HCT116 (cell line): ENCODE measurements at regions of chr5 and their contacts with region 1.

Region 1: GRCh38 chr5:73902327-73903051 is 276.5 kb downstream of the ARHGEF28 start:
- DNase-seq: peak; percentile 63
- ATAC-seq: peak; percentile 36; the same call in 1 of the 2 replicates
- H3K4me3 ChIP-seq: no peak overlapping the region
- H3K27ac ChIP-seq: no peak overlapping the region
- H3K4me1 ChIP-seq: peaks cover 18% of the 10 kb centered on the region in 2 experiments; a peak in 3 of 4 replicates
- H3K27me3 ChIP-seq: no peaks in the 10 kb centered on the region
- CTCF ChIP-seq: peak; percentile 46 to 87 (median 64); a peak in 5 of 6 replicates
- POLR2A ChIP-seq: no peak
- RAD21 ChIP-seq: peak; percentile 89

Region 2: GRCh38 chr5:73591102-73591695 is 311.3 kb before region 1 on chr5:
- CTCF ChIA-PET with region 1: interaction called, 13 read pairs
- POLR2A ChIA-PET with region 1: no interaction called
- RAD21 ChIA-PET with region 1: no interaction called
- intact Hi-C with region 1: loop called (anchors 10 kb)
- DNase-seq: peak; percentile 83
- ATAC-seq: peak; percentile 84
- H3K4me3 ChIP-seq: no peak overlapping the region
- H3K27ac ChIP-seq: no peak overlapping the region
- H3K4me1 ChIP-seq: no peaks in the 10 kb centered on the region
- H3K27me3 ChIP-seq: no peaks in the 10 kb centered on the region
- CTCF ChIP-seq: peak; percentile 59 to 85 (median 80); a peak in 5 of 6 replicates
- POLR2A ChIP-seq: no peak
- RAD21 ChIP-seq: peak; percentile 92

Region 3: DNA sequence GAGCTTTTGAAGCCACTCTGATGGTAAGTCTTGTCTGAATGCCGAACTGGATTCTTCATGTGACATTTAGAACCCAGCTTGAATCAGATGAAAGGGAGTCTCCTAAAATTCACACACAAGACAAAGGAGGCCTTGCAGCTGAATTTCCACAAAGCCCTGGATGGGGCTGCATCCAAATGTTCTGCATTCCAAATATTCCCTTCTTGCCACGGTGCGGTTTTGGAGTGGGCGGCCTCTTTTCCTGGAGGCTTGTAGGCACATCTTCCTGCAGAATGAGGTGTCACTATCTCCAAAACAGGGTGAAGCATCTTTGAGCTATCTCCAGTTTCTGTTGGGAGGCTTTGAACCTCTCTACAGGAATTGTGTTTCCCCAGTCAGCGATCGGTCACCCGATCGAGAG is 66.2 kb after region 1 on chr5:
- CTCF ChIA-PET with region 1: no interaction called
- POLR2A ChIA-PET with region 1: no interaction called
- RAD21 ChIA-PET with region 1: no interaction called
- intact Hi-C with region 1: no loop called
- DNase-seq: no peak
- ATAC-seq: no peak
- H3K4me3 ChIP-seq: no peak overlapping the region
- H3K27ac ChIP-seq: no peak overlapping the region
- H3K4me1 ChIP-seq: no peaks in the 10 kb centered on the region
- H3K27me3 ChIP-seq: no peaks in the 10 kb centered on the region; the same call in 1 of the 2 replicates
- CTCF ChIP-seq: no peak
- POLR2A ChIP-seq: no peak
- RAD21 ChIP-seq: no peak

Region 4: GRCh38 chr5:74640450-74640953 is 738.0 kb after region 1 on chr5 and contains the start of gene ENC1:
- CTCF ChIA-PET with region 1: interaction called, 11 read pairs
- POLR2A ChIA-PET with region 1: interaction called, 4 read pairs
- RAD21 ChIA-PET with region 1: no interaction called
- intact Hi-C with region 1: no loop called
- DNase-seq: peak; percentile 55
- ATAC-seq: peak; percentile 78
- H3K4me3 ChIP-seq: peak within 1 kb of the TSS; percentile 69 to 82
- H3K27ac ChIP-seq: peak within 1 kb of the TSS; percentile 92
- H3K4me1 ChIP-seq: peaks cover 51 to 58% of the 10 kb centered on the region in 2 experiments
- H3K27me3 ChIP-seq: no peaks in the 10 kb centered on the region
- CTCF ChIP-seq: peak; percentile 15 to 35 (median 24); a peak in 3 of 6 replicates
- POLR2A ChIP-seq: peak; percentile 38
- RAD21 ChIP-seq: peak; percentile 38
- total RNA-seq, gene ENC1: 30.0 TPM

Region 5: GRCh38 chr5:74903165-74903787 is 1000.8 kb after region 1 on chr5:
- CTCF ChIA-PET with region 1: interaction called, 3 read pairs
- POLR2A ChIA-PET with region 1: no interaction called
- RAD21 ChIA-PET with region 1: no interaction called
- intact Hi-C with region 1: loop called (anchors 5 kb)
- DNase-seq: peak; percentile 72
- ATAC-seq: peak; percentile 100
- H3K4me3 ChIP-seq: no peak overlapping the region
- H3K27ac ChIP-seq: no peak overlapping the region
- H3K4me1 ChIP-seq: peaks cover 0 to 5% of the 10 kb centered on the region in 2 experiments; a peak in 1 of 4 replicates
- H3K27me3 ChIP-seq: no peaks in the 10 kb centered on the region
- CTCF ChIP-seq: peak; percentile 79 to 87 (median 83)
- POLR2A ChIP-seq: no peak
- RAD21 ChIP-seq: peak; percentile 86

Region 6: DNA sequence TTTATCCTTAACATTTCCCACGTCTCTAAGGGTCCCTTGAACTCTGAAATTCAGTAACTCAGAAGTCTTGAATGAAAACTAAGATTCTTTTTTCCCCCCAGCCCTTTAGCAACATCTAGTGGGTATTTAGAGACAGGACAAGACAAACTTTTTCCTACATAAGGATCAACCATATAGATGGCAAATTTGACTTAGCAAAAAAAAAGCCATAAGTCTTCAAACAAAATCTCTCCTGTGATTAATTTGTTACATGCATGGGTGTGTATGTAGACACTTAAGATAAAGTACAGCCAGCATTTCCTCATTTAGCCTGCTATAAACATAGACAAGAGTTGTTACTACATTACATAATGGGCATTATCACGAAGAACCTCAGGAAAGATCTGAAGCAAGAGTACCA is 1363.2 kb after region 1 on chr5:
- CTCF ChIA-PET with region 1: no interaction called
- POLR2A ChIA-PET with region 1: no interaction called
- RAD21 ChIA-PET with region 1: no interaction called
- intact Hi-C with region 1: loop called (anchors 10 kb)
- DNase-seq: peak; percentile 37
- ATAC-seq: peak; percentile 73
- H3K4me3 ChIP-seq: no peak overlapping the region
- H3K27ac ChIP-seq: no peak overlapping the region
- H3K4me1 ChIP-seq: no peaks in the 10 kb centered on the region
- H3K27me3 ChIP-seq: no peaks in the 10 kb centered on the region
- CTCF ChIP-seq: peak; percentile 71 to 77 (median 76); a peak in 5 of 6 replicates
- POLR2A ChIP-seq: no peak
- RAD21 ChIP-seq: peak; percentile 90